ENCODE measurements at regions of chr14 and their contacts with region 1.

Region 1: GRCh38 chr14:90399541-90400444 is 3.0 kb downstream of the CALM1 start:
- DNase-seq: peak; percentile 95
- H3K4me3 Mint-ChIP-seq: peak overlapping the region; percentile 97
- H3K27ac Mint-ChIP-seq: peak overlapping the region; percentile 98
- H3K4me1 Mint-ChIP-seq: peaks cover 49% of the 10 kb centered on the region
- H3K27me3 Mint-ChIP-seq: no peaks in the 10 kb centered on the region

Region 2: DNA sequence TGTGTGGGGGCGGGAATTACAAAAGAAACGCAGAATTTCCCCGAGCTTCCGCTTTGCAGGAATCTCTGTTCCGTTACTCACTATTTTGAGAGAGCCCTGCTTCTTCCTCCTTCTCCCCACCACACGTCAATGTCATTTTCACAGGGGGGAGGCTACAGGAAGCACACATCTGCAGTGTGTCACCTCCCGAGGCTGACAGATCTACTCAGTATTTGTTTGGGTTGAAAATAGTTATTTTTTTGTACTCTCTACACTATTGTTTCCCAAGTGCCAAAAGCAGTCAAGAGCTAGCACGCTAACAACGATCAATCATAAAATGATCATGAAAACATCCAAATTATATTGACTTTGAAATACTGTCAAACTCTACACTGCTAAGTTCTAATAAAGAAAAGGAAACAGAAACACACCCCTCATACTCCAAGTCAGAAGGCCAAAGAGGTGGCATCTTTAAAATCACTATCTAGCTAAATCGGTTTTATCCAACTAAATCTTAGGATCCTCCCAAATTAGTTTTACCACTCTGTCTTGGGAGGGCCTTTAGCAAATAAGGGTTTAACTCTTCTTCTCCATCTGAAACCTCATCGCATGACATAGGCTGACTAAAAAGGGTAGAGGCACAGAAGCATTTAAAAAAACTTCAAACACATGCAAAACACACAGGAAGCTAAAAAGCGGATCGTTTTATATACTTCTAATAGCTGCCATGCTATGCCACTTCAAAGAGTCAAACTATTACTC is 1034.6 kb before region 1 on chr14:
- intact Hi-C with region 1: loop called (anchors 5 kb)
- DNase-seq: peak; percentile 84
- H3K4me3 Mint-ChIP-seq: peak overlapping the region; percentile 80
- H3K27ac Mint-ChIP-seq: peak overlapping the region; percentile 92
- H3K4me1 Mint-ChIP-seq: peaks cover 38% of the 10 kb centered on the region
- H3K27me3 Mint-ChIP-seq: no peaks in the 10 kb centered on the region

Region 3: GRCh38 chr14:90256354-90257131 is 143.2 kb before region 1 on chr14 and contains the start of gene PSMC1:
- intact Hi-C with region 1: loop called (anchors 1 kb)
- DNase-seq: peak; percentile 96
- H3K4me3 Mint-ChIP-seq: peak within 1 kb of the TSS; percentile 93
- H3K27ac Mint-ChIP-seq: peak within 1 kb of the TSS; percentile 96
- H3K4me1 Mint-ChIP-seq: peaks cover 27% of the 10 kb centered on the region
- H3K27me3 Mint-ChIP-seq: peaks cover 4% of the 10 kb centered on the region
- total RNA-seq, gene PSMC1: 170 and 185 TPM in 2 replicates

Region 4: DNA sequence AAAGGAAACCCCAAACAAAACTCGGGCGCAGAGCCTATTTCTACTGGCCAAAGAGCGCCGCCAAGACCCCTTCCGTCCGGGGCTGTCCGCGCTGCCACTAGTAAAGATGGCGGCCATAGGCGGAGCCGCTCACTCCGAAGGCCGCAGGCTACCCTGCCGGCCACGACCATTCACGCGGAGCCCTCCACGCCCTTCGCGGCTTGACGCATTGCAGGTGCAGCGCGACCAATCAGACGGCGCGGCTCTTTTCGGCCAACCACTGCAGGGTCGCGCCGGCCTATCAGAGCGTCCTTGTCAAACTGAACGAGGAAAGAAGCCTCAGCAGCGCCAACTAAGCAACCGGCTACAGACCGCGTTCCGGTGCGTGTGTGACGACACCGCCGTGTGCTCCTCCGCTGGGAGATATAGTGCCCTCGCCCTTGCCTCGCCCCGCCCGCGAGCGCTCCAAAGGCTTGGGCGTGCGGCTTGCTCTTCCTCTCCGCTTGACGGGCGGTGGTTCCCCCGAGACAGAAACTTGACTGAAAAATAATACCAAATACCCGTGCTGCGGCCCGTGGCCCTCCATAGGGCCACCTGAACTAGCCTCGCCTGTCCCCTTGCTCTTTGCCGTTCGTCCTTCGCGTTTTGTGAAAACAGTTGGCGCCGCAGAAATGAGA is 16.6 kb before region 1 on chr14:
- intact Hi-C with region 1: loop called (anchors 1 kb)
- DNase-seq: peak; percentile 99
- H3K4me3 Mint-ChIP-seq: no peak overlapping the region
- H3K27ac Mint-ChIP-seq: no peak overlapping the region
- H3K4me1 Mint-ChIP-seq: peaks cover 6% of the 10 kb centered on the region
- H3K27me3 Mint-ChIP-seq: no peaks in the 10 kb centered on the region

Region 5: DNA sequence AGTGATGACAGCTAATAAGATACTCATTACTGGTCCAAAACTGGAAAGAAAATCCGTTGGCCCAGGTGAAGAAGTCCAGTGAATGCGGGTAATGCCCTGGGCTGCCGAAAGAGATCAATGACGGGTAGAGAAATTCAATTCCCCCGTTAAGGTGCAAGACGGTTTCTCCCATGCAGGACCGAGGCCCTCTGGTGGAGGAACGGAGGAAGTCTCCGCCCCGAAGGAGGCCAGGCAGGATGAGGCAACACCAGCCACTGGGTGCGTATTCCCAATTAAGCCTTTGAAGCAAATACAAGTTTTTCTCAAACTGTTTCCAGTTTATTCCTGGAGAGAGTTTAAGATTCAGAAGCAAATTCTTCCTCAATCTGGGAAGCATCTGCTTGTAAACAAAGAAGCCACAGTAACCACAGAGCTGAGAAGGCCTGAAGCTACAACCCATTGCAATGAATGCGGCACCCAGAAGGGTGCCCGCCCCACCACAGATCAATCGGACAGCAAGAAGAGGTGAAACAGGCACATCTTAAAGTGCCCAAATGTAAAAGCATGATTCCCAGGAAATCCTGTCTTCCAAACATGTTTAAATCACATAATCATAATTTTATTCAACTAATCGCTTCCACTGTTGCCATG is 297.9 kb after region 1 on chr14:
- intact Hi-C with region 1: loop called (anchors 1 kb)
- DNase-seq: peak; percentile 92
- H3K4me3 Mint-ChIP-seq: no peak overlapping the region
- H3K27ac Mint-ChIP-seq: no peak overlapping the region
- H3K4me1 Mint-ChIP-seq: peaks cover 5% of the 10 kb centered on the region
- H3K27me3 Mint-ChIP-seq: no peaks in the 10 kb centered on the region

Region 6: GRCh38 chr14:91418387-91419043 is 1018.7 kb after region 1 on chr14:
- intact Hi-C with region 1: loop called (anchors 5 kb)
- DNase-seq: peak; percentile 95
- H3K4me3 Mint-ChIP-seq: peak overlapping the region; percentile 76
- H3K27ac Mint-ChIP-seq: peak overlapping the region; percentile 88
- H3K4me1 Mint-ChIP-seq: peaks cover 36% of the 10 kb centered on the region
- H3K27me3 Mint-ChIP-seq: peaks cover 2% of the 10 kb centered on the region

Measured in activated CD4-positive, alpha-beta T cell treated with anti-CD3 and anti-CD28 coated beads, Interleukin-2, amount 10 ng/mL, durations not matched to agents 24 days and 14 days (primary cell).